GM10248 (cell line): ENCODE measurements at regions of chr1 and their contacts with region 1.

Region 1: DNA sequence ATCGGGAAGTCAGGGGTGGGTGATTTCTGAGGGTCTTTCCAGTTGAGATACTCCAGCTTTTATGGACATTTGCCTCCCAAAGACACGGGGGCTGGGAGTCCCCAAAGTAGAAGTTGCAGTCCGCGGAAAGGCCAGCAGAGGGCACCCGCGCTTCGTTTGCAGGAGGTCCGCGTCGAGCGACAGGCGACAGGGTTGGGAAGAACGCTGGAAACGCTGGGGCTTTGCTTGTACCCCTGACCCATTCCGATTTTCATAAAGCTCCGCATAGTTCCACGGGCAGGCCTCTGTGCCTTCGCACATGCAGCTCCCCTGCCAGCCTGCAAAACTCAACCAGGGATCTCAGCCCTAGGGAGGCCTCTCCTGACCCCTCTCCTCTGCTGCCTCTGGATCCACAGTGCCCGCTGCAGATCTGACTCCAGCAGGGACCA is 44.2 kb upstream of the LAPTM5 start:
- DNase-seq: peak; percentile 76
- CTCF ChIP-seq: peak; percentile 97

Region 2: GRCh38 chr1:30732277-30732996 is 69.3 kb before region 1 on chr1:
- CTCF ChIA-PET with region 1: interaction called, 17 read pairs
- POLR2A ChIA-PET with region 1: interaction called, 4 read pairs
- DNase-seq: peak; percentile 68
- CTCF ChIP-seq: no peak

Region 3: DNA sequence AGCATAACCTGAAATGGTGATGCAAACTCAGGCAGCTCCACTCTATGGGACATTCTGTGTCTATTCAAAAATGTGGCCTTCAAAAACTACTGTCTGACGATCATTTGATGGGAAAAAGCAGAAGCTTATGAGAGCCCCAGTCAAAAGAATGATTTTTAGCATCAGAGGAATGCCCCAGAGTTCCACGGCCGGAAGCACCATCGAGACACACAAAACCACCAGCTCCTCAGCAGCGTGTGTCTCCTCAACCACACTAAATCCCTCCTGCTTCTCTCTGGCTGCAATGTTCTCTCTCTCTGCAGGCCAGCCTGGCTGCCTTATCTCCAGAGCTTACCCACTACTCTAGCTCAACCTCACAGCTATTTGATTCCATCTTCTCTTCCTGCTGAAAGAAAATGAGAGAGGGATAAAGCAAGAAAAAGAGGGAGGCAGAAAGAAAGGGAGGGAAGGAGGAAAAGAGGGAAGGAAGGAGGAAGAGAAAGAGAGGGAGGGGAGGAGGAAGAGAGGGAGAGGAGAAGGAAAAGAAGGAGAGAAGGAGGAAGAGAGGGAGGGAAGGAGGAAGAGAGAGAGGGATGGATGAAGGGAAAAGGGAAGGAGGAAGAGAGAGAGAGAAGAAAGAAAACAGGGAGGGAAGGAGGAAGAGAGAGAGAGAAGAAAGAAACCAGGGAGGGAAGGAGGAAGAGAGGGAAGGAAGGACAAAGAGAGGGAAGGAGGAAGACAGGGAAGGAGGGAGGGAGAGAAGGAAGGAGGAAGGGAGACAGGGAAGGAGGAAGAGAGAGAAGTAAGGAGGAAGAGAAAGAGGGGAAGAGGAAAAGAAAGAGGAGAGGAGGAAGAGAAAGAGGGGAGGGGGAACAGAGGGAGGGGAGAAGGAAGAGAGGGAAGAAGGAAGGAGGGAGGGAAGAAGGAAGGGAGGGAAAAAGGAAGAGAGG is 10.7 kb before region 1 on chr1:
- CTCF ChIA-PET with region 1: interaction called, 65 read pairs
- POLR2A ChIA-PET with region 1: no interaction called
- DNase-seq: peak; percentile 50
- CTCF ChIP-seq: no peak

Region 4: DNA sequence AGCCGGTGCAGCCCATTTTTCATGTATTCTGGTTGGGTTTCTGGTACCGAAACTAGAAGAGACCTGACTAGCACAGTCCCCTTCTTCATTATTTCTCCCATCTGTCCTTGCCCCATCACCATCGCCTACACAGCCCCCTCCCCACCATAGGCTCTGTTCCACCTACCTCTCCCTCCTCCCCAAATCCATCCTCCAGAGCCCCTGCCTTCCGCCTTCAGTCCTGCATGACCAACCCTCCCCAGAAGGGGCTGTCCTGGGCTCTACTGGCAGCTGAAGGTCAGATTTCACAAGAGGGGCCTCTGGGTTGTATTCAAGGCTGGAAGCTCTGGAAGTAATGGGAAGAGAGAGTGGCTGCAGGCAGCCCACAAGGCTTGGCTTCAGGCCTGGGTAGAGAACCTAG is 51.6 kb after region 1 on chr1:
- CTCF ChIA-PET with region 1: interaction called, 13 read pairs
- POLR2A ChIA-PET with region 1: no interaction called
- DNase-seq: no peak
- CTCF ChIP-seq: no peak

Region 5: DNA sequence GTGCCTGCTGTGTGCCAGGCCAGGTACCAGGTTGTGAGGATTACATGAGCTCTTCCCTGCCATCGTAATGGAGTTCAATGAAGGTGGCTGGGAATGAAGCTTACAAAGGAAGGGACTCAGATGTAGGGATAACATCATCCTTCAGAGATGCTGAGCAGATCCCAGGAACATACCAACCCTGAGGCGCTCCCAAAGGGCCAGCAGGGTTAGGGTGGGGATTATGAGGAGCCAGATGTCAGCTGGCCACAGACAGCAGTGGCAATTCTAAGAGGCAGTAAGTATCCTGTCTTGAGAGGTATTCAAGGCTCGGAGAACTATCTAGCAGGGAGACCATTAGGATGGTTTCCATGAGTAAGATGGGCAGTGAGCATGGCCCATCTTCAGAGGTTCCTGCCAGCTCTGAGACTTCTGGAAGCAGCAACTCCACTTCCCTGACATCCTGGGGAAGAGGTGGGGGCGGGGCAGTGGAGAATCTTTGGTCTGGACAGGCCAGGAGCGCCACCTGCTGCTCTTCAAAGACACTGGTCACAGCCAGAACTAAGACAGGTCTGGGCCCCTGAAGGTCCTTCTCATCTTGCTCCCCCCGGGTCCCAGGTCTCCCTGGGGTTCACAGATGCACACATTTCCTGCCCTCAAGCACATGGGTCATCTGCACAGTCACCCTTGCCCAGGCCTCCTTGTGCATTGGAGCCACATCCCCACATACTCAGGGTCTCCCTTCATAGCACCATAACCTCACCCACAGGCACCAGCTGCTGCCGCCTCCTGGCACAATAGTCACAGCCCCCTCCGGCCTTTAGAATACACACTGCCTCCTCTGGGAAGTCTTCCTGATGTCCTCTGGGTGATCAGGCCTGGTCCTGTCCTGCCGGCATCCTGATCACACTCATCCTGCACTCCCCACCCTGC is 109.5 kb after region 1 on chr1:
- CTCF ChIA-PET with region 1: interaction called, 246 read pairs
- POLR2A ChIA-PET with region 1: no interaction called
- DNase-seq: peak; percentile 78
- CTCF ChIP-seq: peak; percentile 74

Region 6: DNA sequence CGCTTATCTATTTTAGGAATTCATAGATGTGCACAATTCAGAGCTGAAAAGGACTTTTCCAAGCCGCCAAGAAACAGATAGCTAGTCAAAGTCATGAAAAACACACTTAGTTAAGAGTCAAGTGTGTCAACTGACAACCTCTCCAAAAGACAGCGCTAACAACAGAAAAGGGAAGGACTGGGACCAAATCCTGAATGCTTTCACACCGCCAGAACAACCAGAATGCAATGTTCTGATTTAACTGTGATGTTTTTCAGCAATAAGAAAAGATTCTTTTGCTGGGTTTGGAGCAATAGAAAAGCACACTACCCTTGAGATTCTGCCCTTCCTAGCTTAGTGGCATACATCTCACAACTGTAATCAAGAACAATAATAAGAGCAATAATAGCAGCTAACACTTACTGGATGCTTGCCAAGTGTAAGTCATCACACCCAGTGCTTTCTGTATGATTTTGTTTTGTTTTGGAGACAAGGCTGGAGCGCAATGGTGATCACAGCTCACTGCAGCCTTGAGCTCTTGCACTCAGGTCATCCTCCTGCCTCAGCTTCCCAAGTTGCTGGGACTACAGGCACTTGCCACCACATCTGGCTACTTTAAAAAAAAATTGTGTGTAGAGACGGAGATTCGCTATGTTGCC is 140.7 kb after region 1 on chr1:
- CTCF ChIA-PET with region 1: interaction called, 11 read pairs
- POLR2A ChIA-PET with region 1: no interaction called
- DNase-seq: no peak
- CTCF ChIP-seq: no peak